Posterior cingulate gyrus (tissue), 11 donors: ENCODE measurements at regions of chr6 and their contacts with region 1.

Region 1: GRCh38 chr6:57021086-57021720 is 25.3 kb upstream of the KIAA1586 start:
- DNase-seq: no peak

Region 2: GRCh38 chr6:56902641-56903464 is 118.3 kb before region 1 on chr6:
- intact Hi-C with region 1: loop called (anchors 1 kb)
- DNase-seq: peak in 8 of 10 donors; percentile 21 to 91 (median 54)